ENCODE measurements at regions of chr3 and their contacts with region 1.

Region 1: DNA sequence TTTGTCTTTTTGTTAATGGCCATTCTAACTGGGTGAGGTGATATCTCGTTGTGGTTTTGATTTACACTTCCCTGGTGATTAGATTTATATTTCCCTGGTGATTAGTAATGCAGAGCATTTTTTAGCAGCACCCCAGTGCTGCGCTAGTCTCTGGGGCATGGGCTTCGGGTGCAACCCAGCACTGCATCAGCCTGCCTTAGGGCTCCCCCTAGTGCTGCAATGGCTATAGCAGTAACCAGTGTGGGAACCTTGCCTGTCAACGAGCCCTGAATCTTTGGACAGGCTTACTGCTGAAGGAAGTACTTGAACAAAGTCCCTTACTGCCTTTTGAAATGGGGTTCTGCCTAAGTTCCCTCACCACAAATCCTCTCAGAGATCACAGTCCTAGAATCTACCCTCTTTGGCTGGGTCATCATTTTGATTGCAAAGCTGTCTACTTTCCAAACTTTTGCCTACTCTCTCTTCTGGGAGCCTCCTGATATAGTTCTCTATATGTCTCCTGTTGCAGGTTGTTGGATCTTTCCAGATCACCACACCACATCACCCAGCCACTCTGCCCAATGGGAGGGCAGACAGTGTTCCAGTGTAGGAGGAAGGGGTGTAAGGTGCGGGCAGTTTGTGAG is 79.2 kb upstream of the CCNL1 start:
- DNase-seq: peak; percentile 93
- H3K4me3 Mint-ChIP-seq: no peak overlapping the region
- H3K27ac Mint-ChIP-seq: no peak overlapping the region
- H3K4me1 Mint-ChIP-seq: peaks cover 8% of the 10 kb centered on the region
- H3K27me3 Mint-ChIP-seq: no peaks in the 10 kb centered on the region
- CTCF ChIP-seq: peak; percentile 97

Region 2: GRCh38 chr3:157317895-157318294 is 78.7 kb after region 1 on chr3:
- CTCF ChIA-PET with region 1: no interaction called
- intact Hi-C with region 1: loop called (anchors 5 kb)
- DNase-seq: no peak
- H3K4me3 Mint-ChIP-seq: peak overlapping the region; percentile 4
- H3K27ac Mint-ChIP-seq: peak overlapping the region; percentile 60
- H3K4me1 Mint-ChIP-seq: peaks cover 33% of the 10 kb centered on the region
- H3K27me3 Mint-ChIP-seq: no peaks in the 10 kb centered on the region
- CTCF ChIP-seq: no peak